T-cell (primary cell): ENCODE measurements at regions of chr11 and their contacts with region 1.

Region 1: GRCh38 chr11:77471558-77472193 is 2.2 kb downstream of the PAK1 start:
- DNase-seq: peak in 17 of 35 experiments; percentile 3 to 41 (median 21)
- ATAC-seq: no peak
- H3K4me3 ChIP-seq: no peak overlapping the region
- H3K4me3 Mint-ChIP-seq: peak overlapping the region in 2 of 3 donors; percentile 66 to 89
- H3K27ac ChIP-seq: no peak overlapping the region
- H3K27ac Mint-ChIP-seq: no peak overlapping the region
- H3K4me1 ChIP-seq: peaks cover 10 to 11% of the 10 kb centered on the region in 2 experiments
- H3K4me1 Mint-ChIP-seq: peaks cover 16 to 31% (median 21%) of the 10 kb centered on the region in 3 donors
- H3K27me3 ChIP-seq: no peaks in the 10 kb centered on the region
- H3K27me3 Mint-ChIP-seq: peaks cover 0 to 3% of the 10 kb centered on the region in 2 donors

Region 2: GRCh38 chr11:77547863-77548551 is 76.3 kb after region 1 on chr11:
- CTCF ChIA-PET with region 1: interaction called, 6 to 10 read pairs
- POLR2A ChIA-PET with region 1: interaction called in 1 of 2 experiments, 5 read pairs
- DNase-seq: peak in 23 of 35 experiments; percentile 1 to 72 (median 19)
- ATAC-seq: peak in 1 of 4 experiments; percentile 43
- H3K4me3 ChIP-seq: no peak overlapping the region
- H3K4me3 Mint-ChIP-seq: no peak overlapping the region
- H3K27ac ChIP-seq: no peak overlapping the region
- H3K27ac Mint-ChIP-seq: no peak overlapping the region
- H3K4me1 ChIP-seq: no peaks in the 10 kb centered on the region
- H3K4me1 Mint-ChIP-seq: peaks cover 0 to 9% (median 5%) of the 10 kb centered on the region in 3 donors
- H3K27me3 ChIP-seq: no peaks in the 10 kb centered on the region
- H3K27me3 Mint-ChIP-seq: no peaks in the 10 kb centered on the region